A673 (cell line): ENCODE measurements at regions of chr14 and their contacts with region 1.

Region 1: GRCh38 chr14:80850197-80850814 is 91.2 kb downstream of the CEP128 start:
- DNase-seq: peak; percentile 51
- H3K4me3 ChIP-seq: no peak overlapping the region
- H3K27ac ChIP-seq: no peak overlapping the region
- H3K4me1 ChIP-seq: no peaks in the 10 kb centered on the region
- H3K27me3 ChIP-seq: no peaks in the 10 kb centered on the region
- CTCF ChIP-seq: peak; percentile 73

Region 2: GRCh38 chr14:78959674-78960264 is 1890.5 kb before region 1 on chr14:
- CTCF ChIA-PET with region 1: no interaction called
- POLR2A ChIA-PET with region 1: no interaction called
- intact Hi-C with region 1: loop called (anchors 10 kb)
- DNase-seq: peak; percentile 74
- H3K4me3 ChIP-seq: no peak overlapping the region
- H3K27ac ChIP-seq: no peak overlapping the region
- H3K4me1 ChIP-seq: no peaks in the 10 kb centered on the region
- H3K27me3 ChIP-seq: peaks cover 5% of the 10 kb centered on the region
- CTCF ChIP-seq: peak; percentile 87

Region 3: DNA sequence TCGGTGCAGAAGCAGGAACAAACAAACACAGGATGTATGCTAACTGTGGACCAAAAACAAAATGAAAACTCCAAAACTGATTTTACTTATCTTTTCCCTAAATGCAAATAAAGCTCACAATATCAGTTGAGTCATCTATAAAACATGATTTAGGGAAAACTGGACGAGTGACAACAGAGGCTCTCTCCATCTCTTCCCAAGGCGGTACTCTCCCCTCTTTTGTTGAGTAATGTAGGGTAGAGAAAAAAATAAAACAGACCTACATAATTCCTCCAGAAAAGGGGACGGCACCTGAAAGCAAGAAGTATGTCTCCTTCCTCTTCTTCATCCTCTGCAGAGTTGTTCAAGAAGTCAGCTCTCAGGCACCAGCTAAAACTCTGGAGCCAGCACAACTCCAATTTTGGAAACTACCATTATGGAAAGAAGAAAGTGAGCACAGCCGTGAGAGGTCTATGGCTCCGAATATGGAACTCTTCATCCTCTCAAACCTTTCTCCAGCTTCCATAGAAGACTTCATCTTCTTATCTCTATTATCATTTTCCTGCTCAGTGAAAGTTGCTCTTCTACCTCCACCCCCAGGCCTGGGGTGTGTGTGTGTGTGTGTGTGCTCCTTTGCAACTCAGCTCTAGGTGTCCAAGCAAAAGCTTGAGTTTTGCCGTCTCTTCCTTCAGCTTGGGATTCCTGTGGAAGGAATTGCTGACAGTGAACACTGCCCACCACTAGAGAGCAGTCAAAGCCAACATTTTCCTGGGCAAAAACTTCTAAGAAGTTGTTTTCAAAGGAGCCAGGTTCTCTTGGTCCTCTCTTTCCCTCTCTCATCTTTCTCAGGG is 794.4 kb before region 1 on chr14:
- CTCF ChIA-PET with region 1: no interaction called
- POLR2A ChIA-PET with region 1: no interaction called
- intact Hi-C with region 1: loop called (anchors 5 kb)
- DNase-seq: peak; percentile 55
- H3K4me3 ChIP-seq: no peak overlapping the region
- H3K27ac ChIP-seq: no peak overlapping the region
- H3K4me1 ChIP-seq: no peaks in the 10 kb centered on the region
- H3K27me3 ChIP-seq: no peaks in the 10 kb centered on the region
- CTCF ChIP-seq: peak; percentile 74

Region 4: DNA sequence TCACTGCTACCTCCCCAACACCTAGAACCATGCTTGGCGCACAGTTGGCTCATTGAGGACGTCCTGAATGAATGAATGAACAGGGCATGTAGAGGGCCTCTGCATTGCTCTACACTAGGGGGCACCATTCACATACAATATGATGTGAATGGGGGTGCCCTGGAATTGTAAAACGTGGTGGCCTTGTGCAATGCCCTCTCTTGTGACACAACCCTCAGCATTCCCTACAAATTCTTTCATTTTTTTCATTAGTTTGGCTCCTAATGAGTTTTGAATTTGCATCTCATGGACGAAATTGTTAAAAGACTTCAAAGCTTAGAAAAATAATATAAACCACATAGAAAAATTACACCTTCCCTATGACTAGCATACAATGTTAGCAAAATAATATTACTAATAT is 636.7 kb before region 1 on chr14:
- CTCF ChIA-PET with region 1: no interaction called
- POLR2A ChIA-PET with region 1: no interaction called
- intact Hi-C with region 1: loop called (anchors 1 kb)
- DNase-seq: peak; percentile 72
- H3K4me3 ChIP-seq: no peak overlapping the region
- H3K27ac ChIP-seq: no peak overlapping the region
- H3K4me1 ChIP-seq: no peaks in the 10 kb centered on the region
- H3K27me3 ChIP-seq: no peaks in the 10 kb centered on the region
- CTCF ChIP-seq: peak; percentile 75